Activated CD4-positive, alpha-beta T cell treated with anti-CD3 and anti-CD28 coated beads, Interleukin-2, amount 10 ng/mL, durations not matched to agents 24 days and 14 days (primary cell): ENCODE measurements at regions of chr3 and their contacts with region 1.

Region 1: GRCh38 chr3:128725932-128726690 is at the start of gene RAB7A:
- DNase-seq: peak; percentile 99
- H3K4me3 Mint-ChIP-seq: peak within 1 kb of the TSS; percentile 92
- H3K27ac Mint-ChIP-seq: peak within 1 kb of the TSS; percentile 94
- H3K4me1 Mint-ChIP-seq: peaks cover 42% of the 10 kb centered on the region
- H3K27me3 Mint-ChIP-seq: peaks cover 4% of the 10 kb centered on the region
- total RNA-seq, gene RAB7A: 338 and 361 TPM in 2 replicates

Region 2: GRCh38 chr3:128617557-128618397 is 108.3 kb before region 1 on chr3:
- intact Hi-C with region 1: loop called (anchors 2 kb)
- DNase-seq: peak; percentile 100
- H3K4me3 Mint-ChIP-seq: peak overlapping the region; percentile 95
- H3K27ac Mint-ChIP-seq: peak overlapping the region; percentile 96
- H3K4me1 Mint-ChIP-seq: peaks cover 34% of the 10 kb centered on the region
- H3K27me3 Mint-ChIP-seq: no peaks in the 10 kb centered on the region

Region 3: GRCh38 chr3:128650096-128651050 is 75.7 kb before region 1 on chr3 and contains the start of gene RPN1:
- intact Hi-C with region 1: loop called (anchors 1 kb)
- DNase-seq: peak; percentile 98
- H3K4me3 Mint-ChIP-seq: peak within 1 kb of the TSS; percentile 88
- H3K27ac Mint-ChIP-seq: peak within 1 kb of the TSS; percentile 92
- H3K4me1 Mint-ChIP-seq: peaks cover 32% of the 10 kb centered on the region
- H3K27me3 Mint-ChIP-seq: no peaks in the 10 kb centered on the region
- total RNA-seq, gene RPN1: 192 and 194 TPM in 2 replicates

Region 4: GRCh38 chr3:128787256-128788240 is 61.4 kb after region 1 on chr3:
- intact Hi-C with region 1: loop called (anchors 1 kb)
- DNase-seq: peak; percentile 79
- H3K4me3 Mint-ChIP-seq: peak overlapping the region; percentile 89
- H3K27ac Mint-ChIP-seq: peak overlapping the region; percentile 100
- H3K4me1 Mint-ChIP-seq: peaks cover 76% of the 10 kb centered on the region
- H3K27me3 Mint-ChIP-seq: no peaks in the 10 kb centered on the region

Region 5: DNA sequence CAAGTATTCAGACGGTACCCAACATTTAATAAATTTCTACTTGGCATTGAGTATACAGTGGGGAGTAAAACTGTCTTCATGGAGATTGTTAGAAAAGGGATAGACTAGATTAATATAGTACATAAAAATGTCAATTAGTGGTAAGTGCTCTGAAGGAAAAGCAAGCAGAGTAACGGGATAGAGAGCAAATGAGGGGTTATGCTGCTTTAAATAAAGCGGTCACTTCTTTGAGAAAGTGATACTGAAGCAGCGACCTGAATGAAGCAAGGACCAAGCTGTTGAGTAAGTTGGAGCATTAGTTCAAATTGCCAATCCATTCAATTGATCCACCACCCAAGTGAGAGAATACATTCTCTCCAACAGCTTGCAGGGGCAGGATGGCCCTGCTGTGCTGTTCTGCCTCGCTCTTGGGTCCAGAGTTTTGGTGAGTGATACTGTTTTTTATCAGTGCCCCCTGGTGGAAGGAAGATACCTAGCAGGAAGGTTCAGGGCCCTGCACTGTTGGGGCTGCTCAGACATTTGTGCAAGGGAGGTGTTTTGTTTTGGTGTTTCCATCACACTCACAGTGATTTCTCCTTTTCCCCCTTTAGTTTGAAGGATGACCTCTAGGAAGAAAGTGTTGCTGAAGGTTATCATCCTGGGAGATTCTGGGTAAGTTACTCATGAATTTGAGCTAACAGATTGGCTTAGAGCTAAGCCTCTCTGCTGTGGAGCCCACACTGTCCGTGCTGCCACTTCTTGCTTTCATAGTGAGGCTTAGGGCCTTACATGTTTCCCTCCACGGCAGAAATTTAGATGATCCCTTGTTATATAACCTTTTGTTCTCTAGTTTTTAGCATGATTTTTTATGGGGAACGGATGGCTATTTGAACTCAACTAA is 68.9 kb after region 1 on chr3:
- intact Hi-C with region 1: loop called (anchors 2 kb)
- DNase-seq: peak; percentile 91
- H3K4me3 Mint-ChIP-seq: peak overlapping the region; percentile 68
- H3K27ac Mint-ChIP-seq: peak overlapping the region; percentile 94
- H3K4me1 Mint-ChIP-seq: peaks cover 72% of the 10 kb centered on the region
- H3K27me3 Mint-ChIP-seq: no peaks in the 10 kb centered on the region